ENCODE measurements at regions of chr2 and their contacts with region 1.

Region 1: GRCh38 chr2:148989882-148990493 is 48.5 kb upstream of the LYPD6B start:
- DNase-seq: peak in 11 of 14 experiments; percentile 13 to 80 (median 37)
- ATAC-seq: peak; percentile 82
- H3K4me3 ChIP-seq: no peak overlapping the region
- H3K4me3 Mint-ChIP-seq: no peak overlapping the region
- H3K27ac ChIP-seq: no peak overlapping the region
- H3K27ac Mint-ChIP-seq: no peak overlapping the region
- H3K4me1 ChIP-seq: no peaks in the 10 kb centered on the region
- H3K4me1 Mint-ChIP-seq: no peaks in the 10 kb centered on the region
- H3K27me3 ChIP-seq: no peaks in the 10 kb centered on the region
- H3K27me3 Mint-ChIP-seq: no peaks in the 10 kb centered on the region
- CTCF ChIP-seq: peak; percentile 51

Region 2: DNA sequence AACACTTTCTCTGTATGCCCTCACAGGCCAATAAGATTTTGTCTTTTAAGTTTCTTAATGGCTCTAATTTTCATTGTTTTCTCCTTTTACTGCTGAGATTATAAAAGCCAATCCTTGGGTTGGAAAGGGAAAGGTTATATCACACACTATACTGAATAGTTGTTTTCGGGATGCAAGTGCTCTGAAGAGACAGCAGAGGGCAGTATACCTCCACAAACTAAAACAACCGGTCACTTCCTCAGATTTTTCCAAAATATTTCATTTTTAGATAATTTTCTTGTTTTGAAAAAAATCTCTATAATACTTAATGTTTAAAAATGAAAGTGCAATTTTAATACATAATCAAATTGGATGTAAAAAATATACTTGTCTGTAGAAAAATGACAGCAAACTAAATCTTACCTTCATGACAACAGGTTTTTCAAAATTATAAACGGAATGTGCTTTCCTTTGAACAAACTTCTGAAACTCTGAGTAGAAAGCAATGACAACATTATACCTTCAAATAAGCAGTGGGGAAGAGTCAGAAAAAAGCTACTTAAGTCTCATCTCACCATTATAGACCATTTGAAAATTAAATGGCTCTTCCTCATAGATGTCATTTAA is 1052.1 kb before region 1 on chr2:
- CTCF ChIA-PET with region 1: no interaction called
- POLR2A ChIA-PET with region 1: no interaction called
- intact Hi-C with region 1: loop called (anchors 1 kb)
- DNase-seq: peak in 3 of 14 experiments; percentile 35 to 57 (median 43)
- ATAC-seq: peak; percentile 68
- H3K4me3 ChIP-seq: no peak overlapping the region
- H3K4me3 Mint-ChIP-seq: no peak overlapping the region
- H3K27ac ChIP-seq: no peak overlapping the region
- H3K27ac Mint-ChIP-seq: no peak overlapping the region
- H3K4me1 ChIP-seq: no peaks in the 10 kb centered on the region
- H3K4me1 Mint-ChIP-seq: no peaks in the 10 kb centered on the region
- H3K27me3 ChIP-seq: no peaks in the 10 kb centered on the region
- H3K27me3 Mint-ChIP-seq: no peaks in the 10 kb centered on the region
- CTCF ChIP-seq: peak; percentile 97

Region 3: GRCh38 chr2:147989809-147990403 is 1000.1 kb before region 1 on chr2:
- CTCF ChIA-PET with region 1: interaction called, 6 read pairs
- POLR2A ChIA-PET with region 1: no interaction called
- intact Hi-C with region 1: loop called (anchors 1 to 2 kb)
- DNase-seq: peak in 7 of 14 experiments; percentile 5 to 73 (median 44)
- ATAC-seq: peak; percentile 95
- H3K4me3 ChIP-seq: no peak overlapping the region
- H3K4me3 Mint-ChIP-seq: no peak overlapping the region
- H3K27ac ChIP-seq: no peak overlapping the region
- H3K27ac Mint-ChIP-seq: peak overlapping the region; percentile 25
- H3K4me1 ChIP-seq: no peaks in the 10 kb centered on the region
- H3K4me1 Mint-ChIP-seq: peaks cover 38% of the 10 kb centered on the region
- H3K27me3 ChIP-seq: no peaks in the 10 kb centered on the region
- H3K27me3 Mint-ChIP-seq: no peaks in the 10 kb centered on the region
- CTCF ChIP-seq: peak; percentile 97

Region 4: GRCh38 chr2:148565272-148565894 is 424.6 kb before region 1 on chr2:
- CTCF ChIA-PET with region 1: no interaction called
- POLR2A ChIA-PET with region 1: no interaction called
- intact Hi-C with region 1: loop called in 1 of 2 experiments (anchors 10 kb)
- DNase-seq: no peak
- ATAC-seq: no peak
- H3K4me3 ChIP-seq: no peak overlapping the region
- H3K4me3 Mint-ChIP-seq: no peak overlapping the region
- H3K27ac ChIP-seq: no peak overlapping the region
- H3K27ac Mint-ChIP-seq: no peak overlapping the region
- H3K4me1 ChIP-seq: peaks cover 19% of the 10 kb centered on the region
- H3K4me1 Mint-ChIP-seq: peaks cover 18% of the 10 kb centered on the region
- H3K27me3 ChIP-seq: no peaks in the 10 kb centered on the region
- H3K27me3 Mint-ChIP-seq: no peaks in the 10 kb centered on the region
- CTCF ChIP-seq: no peak

Region 5: DNA sequence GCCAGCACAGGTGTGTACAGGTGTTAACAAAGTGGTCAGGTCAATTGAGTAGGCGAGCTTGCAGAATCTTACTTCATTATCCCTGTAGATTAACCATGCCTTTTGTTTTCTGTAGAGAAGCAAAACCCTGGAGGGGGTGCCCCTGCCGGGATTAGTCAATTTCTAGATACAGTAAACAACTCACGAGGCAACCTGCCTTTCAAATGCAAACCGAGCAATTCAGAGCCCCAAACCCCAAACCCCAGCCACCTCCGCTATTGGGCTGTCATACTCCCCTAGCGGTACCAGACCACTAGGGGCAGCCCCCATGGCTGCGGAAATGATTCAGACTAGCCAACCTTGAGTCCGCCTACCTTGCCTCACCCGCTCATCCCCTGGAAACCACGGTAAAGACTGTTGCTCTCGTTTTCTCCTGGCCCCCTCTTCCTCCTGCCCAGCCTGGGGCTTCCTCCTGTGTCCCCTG is 176.4 kb before region 1 on chr2:
- CTCF ChIA-PET with region 1: no interaction called
- POLR2A ChIA-PET with region 1: no interaction called
- intact Hi-C with region 1: no loop called
- DNase-seq: peak; percentile 20 to 79 (median 40)
- ATAC-seq: peak; percentile 96
- H3K4me3 ChIP-seq: peak overlapping the region; percentile 10
- H3K4me3 Mint-ChIP-seq: peak overlapping the region; percentile 3
- H3K27ac ChIP-seq: no peak overlapping the region
- H3K27ac Mint-ChIP-seq: no peak overlapping the region
- H3K4me1 ChIP-seq: peaks cover 15% of the 10 kb centered on the region
- H3K4me1 Mint-ChIP-seq: peaks cover 5% of the 10 kb centered on the region
- H3K27me3 ChIP-seq: peaks cover 5% of the 10 kb centered on the region in 2 experiments
- H3K27me3 Mint-ChIP-seq: peaks cover 16% of the 10 kb centered on the region
- CTCF ChIP-seq: no peak

Region 6: GRCh38 chr2:148926291-148926961 is 63.6 kb before region 1 on chr2:
- CTCF ChIA-PET with region 1: no interaction called
- POLR2A ChIA-PET with region 1: no interaction called
- intact Hi-C with region 1: loop called (anchors 2 kb)
- DNase-seq: peak; percentile 9 to 74 (median 46)
- ATAC-seq: peak; percentile 87
- H3K4me3 ChIP-seq: peak overlapping the region; percentile 44
- H3K4me3 Mint-ChIP-seq: peak overlapping the region; percentile 79
- H3K27ac ChIP-seq: peak overlapping the region in 1 of 2 donors; percentile 33
- H3K27ac Mint-ChIP-seq: peak overlapping the region; percentile 61
- H3K4me1 ChIP-seq: peaks cover 16% of the 10 kb centered on the region
- H3K4me1 Mint-ChIP-seq: peaks cover 25% of the 10 kb centered on the region
- H3K27me3 ChIP-seq: no peaks in the 10 kb centered on the region
- H3K27me3 Mint-ChIP-seq: no peaks in the 10 kb centered on the region
- CTCF ChIP-seq: peak; percentile 76

Measured in CD4-positive, alpha-beta T cell (primary cell).